Endothelial cell of umbilical vein (primary cell): ENCODE measurements at regions of chr16 and their contacts with region 1.

Region 1: GRCh38 chr16:72291531-72291981 is 119.6 kb upstream of the PMFBP1 start:
- DNase-seq: peak; percentile 87
- H3K4me3 ChIP-seq: peak overlapping the region in 1 of 3 experiments; percentile 44
- H3K27ac ChIP-seq: peak overlapping the region; percentile 97
- H3K4me1 ChIP-seq: peaks cover 32% of the 10 kb centered on the region
- H3K27me3 ChIP-seq: no peaks in the 10 kb centered on the region
- CTCF ChIP-seq: no peak
- POLR2A ChIP-seq: peak; percentile 45

Region 2: DNA sequence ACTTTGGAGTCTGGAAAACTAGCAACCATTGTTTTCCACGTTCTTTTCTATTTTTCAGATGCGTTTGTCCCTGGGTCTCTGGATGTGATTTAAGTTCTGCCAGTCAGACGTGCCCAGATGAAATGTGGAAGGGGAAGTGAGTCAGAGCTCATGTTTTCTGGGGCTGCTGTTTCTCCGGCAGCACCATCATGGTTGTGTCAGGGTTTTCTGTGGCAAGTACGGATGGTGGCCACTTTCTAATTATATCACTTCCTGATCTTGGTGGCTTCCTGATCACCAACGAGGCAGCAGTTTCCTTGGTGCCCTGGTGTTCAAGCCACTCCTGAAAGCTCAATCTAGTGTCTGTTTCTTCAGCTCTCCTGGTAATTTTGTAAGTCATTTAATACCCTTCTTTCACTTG is 88.2 kb before region 1 on chr16:
- CTCF ChIA-PET with region 1: no interaction called
- POLR2A ChIA-PET with region 1: no interaction called
- dilution Hi-C with region 1: no loop called
- intact Hi-C with region 1: loop called (anchors 5 kb)
- DNase-seq: peak; percentile 83
- H3K4me3 ChIP-seq: no peak overlapping the region
- H3K27ac ChIP-seq: peak overlapping the region; percentile 71
- H3K4me1 ChIP-seq: peaks cover 14% of the 10 kb centered on the region
- H3K27me3 ChIP-seq: no peaks in the 10 kb centered on the region
- CTCF ChIP-seq: no peak
- POLR2A ChIP-seq: no peak

Region 3: GRCh38 chr16:72247821-72248253 is 43.7 kb before region 1 on chr16:
- CTCF ChIA-PET with region 1: interaction called, 6 read pairs
- POLR2A ChIA-PET with region 1: no interaction called
- dilution Hi-C with region 1: no loop called
- intact Hi-C with region 1: loop called (anchors 1 kb)
- DNase-seq: peak; percentile 55
- H3K4me3 ChIP-seq: no peak overlapping the region
- H3K27ac ChIP-seq: no peak overlapping the region
- H3K4me1 ChIP-seq: peaks cover 6% of the 10 kb centered on the region
- H3K27me3 ChIP-seq: no peaks in the 10 kb centered on the region
- CTCF ChIP-seq: no peak
- POLR2A ChIP-seq: no peak

Region 4: GRCh38 chr16:72362973-72363372 is 71.4 kb after region 1 on chr16:
- CTCF ChIA-PET with region 1: interaction called, 4 read pairs
- POLR2A ChIA-PET with region 1: interaction called, 3 read pairs
- dilution Hi-C with region 1: no loop called
- intact Hi-C with region 1: loop called (anchors 1 kb)
- DNase-seq: peak; percentile 88
- H3K4me3 ChIP-seq: no peak overlapping the region
- H3K27ac ChIP-seq: peak overlapping the region; percentile 66
- H3K4me1 ChIP-seq: peaks cover 18% of the 10 kb centered on the region
- H3K27me3 ChIP-seq: no peaks in the 10 kb centered on the region
- CTCF ChIP-seq: no peak
- POLR2A ChIP-seq: no peak

Region 5: GRCh38 chr16:72373201-72373600 is 81.6 kb after region 1 on chr16:
- CTCF ChIA-PET with region 1: no interaction called
- POLR2A ChIA-PET with region 1: no interaction called
- dilution Hi-C with region 1: no loop called
- intact Hi-C with region 1: no loop called
- DNase-seq: no peak
- H3K4me3 ChIP-seq: no peak overlapping the region
- H3K27ac ChIP-seq: no peak overlapping the region
- H3K4me1 ChIP-seq: peaks cover 21% of the 10 kb centered on the region
- H3K27me3 ChIP-seq: no peaks in the 10 kb centered on the region
- CTCF ChIP-seq: no peak
- POLR2A ChIP-seq: no peak

Region 6: GRCh38 chr16:72480901-72481300 is 189.3 kb after region 1 on chr16:
- CTCF ChIA-PET with region 1: no interaction called
- POLR2A ChIA-PET with region 1: no interaction called
- dilution Hi-C with region 1: no loop called
- intact Hi-C with region 1: loop called (anchors 1 kb)
- DNase-seq: peak; percentile 29
- H3K4me3 ChIP-seq: no peak overlapping the region
- H3K27ac ChIP-seq: peak overlapping the region; percentile 55
- H3K4me1 ChIP-seq: peaks cover 27% of the 10 kb centered on the region
- H3K27me3 ChIP-seq: no peaks in the 10 kb centered on the region
- CTCF ChIP-seq: no peak
- POLR2A ChIP-seq: no peak

Region 7: GRCh38 chr16:72876221-72876620 is 584.7 kb after region 1 on chr16:
- CTCF ChIA-PET with region 1: no interaction called
- POLR2A ChIA-PET with region 1: no interaction called
- dilution Hi-C with region 1: no loop called
- intact Hi-C with region 1: loop called (anchors 2 kb)
- DNase-seq: peak; percentile 67
- H3K4me3 ChIP-seq: no peak overlapping the region
- H3K27ac ChIP-seq: peak overlapping the region; percentile 92
- H3K4me1 ChIP-seq: peaks cover 31% of the 10 kb centered on the region
- H3K27me3 ChIP-seq: no peaks in the 10 kb centered on the region
- CTCF ChIP-seq: no peak
- POLR2A ChIP-seq: no peak